ENCODE measurements at regions of chr9 and their contacts with region 1.

Region 1: GRCh38 chr9:27276193-27277030 is 20.5 kb downstream of the EQTN start:
- DNase-seq: no peak
- H3K4me3 ChIP-seq: no peak overlapping the region
- H3K27me3 ChIP-seq: no peaks in the 10 kb centered on the region
- CTCF ChIP-seq: peak; percentile 61

Region 2: GRCh38 chr9:26975693-26976059 is 300.7 kb before region 1 on chr9:
- CTCF ChIA-PET with region 1: no interaction called
- POLR2A ChIA-PET with region 1: no interaction called
- DNase-seq: no peak
- H3K4me3 ChIP-seq: no peak overlapping the region
- H3K27me3 ChIP-seq: no peaks in the 10 kb centered on the region
- CTCF ChIP-seq: peak; percentile 62

Region 3: GRCh38 chr9:27033823-27034403 is 242.5 kb before region 1 on chr9:
- CTCF ChIA-PET with region 1: interaction called, 17 read pairs
- POLR2A ChIA-PET with region 1: no interaction called
- DNase-seq: no peak
- H3K4me3 ChIP-seq: no peak overlapping the region
- H3K27me3 ChIP-seq: no peaks in the 10 kb centered on the region
- CTCF ChIP-seq: peak; percentile 76

Region 4: DNA sequence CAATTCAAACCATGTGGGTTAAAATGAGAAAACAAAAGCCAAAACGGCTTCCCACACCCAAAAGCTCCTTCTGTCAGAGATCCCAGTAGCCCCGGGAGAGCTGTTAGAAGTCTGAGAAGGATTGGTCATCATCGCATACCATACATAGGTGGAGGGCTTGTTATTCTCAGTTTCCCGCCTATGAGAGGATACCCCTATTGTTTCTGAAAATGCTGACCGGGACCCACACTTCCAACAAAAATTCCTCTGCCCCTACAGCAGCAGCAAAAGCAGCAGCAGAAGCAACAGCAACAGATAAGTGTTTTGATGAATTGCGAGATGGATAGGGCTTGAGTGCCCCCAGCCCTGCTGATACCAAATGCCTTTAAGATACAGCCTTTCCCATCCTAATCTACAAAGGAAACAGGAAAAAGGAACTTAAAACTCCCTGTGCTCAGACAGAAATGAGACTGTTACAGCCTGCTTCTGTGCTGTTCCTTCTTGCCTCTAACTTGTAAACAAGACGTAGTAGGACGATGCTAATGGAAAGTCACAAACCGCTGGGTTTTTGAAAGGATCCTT is 167.4 kb before region 1 on chr9 and contains the start of gene TEK:
- CTCF ChIA-PET with region 1: no interaction called
- POLR2A ChIA-PET with region 1: no interaction called
- DNase-seq: no peak
- H3K4me3 ChIP-seq: no peak within 1 kb of the TSS
- H3K27me3 ChIP-seq: no peaks in the 10 kb centered on the region
- CTCF ChIP-seq: no peak
- polyA plus RNA-seq, gene TEK: 0.60 and 0.71 TPM in 2 replicates

Region 5: GRCh38 chr9:27142299-27142930 is 134.0 kb before region 1 on chr9:
- CTCF ChIA-PET with region 1: interaction called, 12 read pairs
- POLR2A ChIA-PET with region 1: no interaction called
- DNase-seq: no peak
- H3K4me3 ChIP-seq: no peak overlapping the region
- H3K27me3 ChIP-seq: no peaks in the 10 kb centered on the region
- CTCF ChIP-seq: no peak

Region 6: DNA sequence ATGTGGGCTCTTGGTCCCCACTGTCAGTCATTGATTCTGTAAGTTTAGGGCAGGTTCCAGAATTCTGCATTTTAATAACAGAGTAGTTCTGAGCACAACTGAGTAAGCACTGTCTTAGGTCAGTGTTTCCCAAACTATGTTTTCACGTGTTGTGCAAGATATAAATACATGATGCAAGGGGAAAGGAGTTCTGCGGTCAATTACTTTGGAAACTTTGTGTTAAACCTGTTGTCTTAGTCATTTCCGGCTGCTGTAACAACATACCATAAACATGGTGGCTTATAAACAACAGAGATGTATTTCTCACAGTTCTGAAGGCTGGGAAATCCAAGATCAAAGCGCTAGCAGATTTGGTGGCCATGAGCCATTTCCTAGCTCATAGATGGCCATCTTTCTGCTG is 49.2 kb before region 1 on chr9:
- CTCF ChIA-PET with region 1: no interaction called
- POLR2A ChIA-PET with region 1: no interaction called
- DNase-seq: no peak
- H3K4me3 ChIP-seq: no peak overlapping the region
- H3K27me3 ChIP-seq: no peaks in the 10 kb centered on the region
- CTCF ChIP-seq: no peak

Region 7: GRCh38 chr9:27260789-27261516 is 15.5 kb before region 1 on chr9:
- CTCF ChIA-PET with region 1: interaction called, 11 read pairs
- POLR2A ChIA-PET with region 1: no interaction called
- DNase-seq: no peak
- H3K4me3 ChIP-seq: no peak overlapping the region
- H3K27me3 ChIP-seq: no peaks in the 10 kb centered on the region; the same call in 1 of the 2 replicates
- CTCF ChIP-seq: no peak

Measured in BJ (cell line).